ENCODE measurements at regions of chr10 and their contacts with region 1.

Region 1: DNA sequence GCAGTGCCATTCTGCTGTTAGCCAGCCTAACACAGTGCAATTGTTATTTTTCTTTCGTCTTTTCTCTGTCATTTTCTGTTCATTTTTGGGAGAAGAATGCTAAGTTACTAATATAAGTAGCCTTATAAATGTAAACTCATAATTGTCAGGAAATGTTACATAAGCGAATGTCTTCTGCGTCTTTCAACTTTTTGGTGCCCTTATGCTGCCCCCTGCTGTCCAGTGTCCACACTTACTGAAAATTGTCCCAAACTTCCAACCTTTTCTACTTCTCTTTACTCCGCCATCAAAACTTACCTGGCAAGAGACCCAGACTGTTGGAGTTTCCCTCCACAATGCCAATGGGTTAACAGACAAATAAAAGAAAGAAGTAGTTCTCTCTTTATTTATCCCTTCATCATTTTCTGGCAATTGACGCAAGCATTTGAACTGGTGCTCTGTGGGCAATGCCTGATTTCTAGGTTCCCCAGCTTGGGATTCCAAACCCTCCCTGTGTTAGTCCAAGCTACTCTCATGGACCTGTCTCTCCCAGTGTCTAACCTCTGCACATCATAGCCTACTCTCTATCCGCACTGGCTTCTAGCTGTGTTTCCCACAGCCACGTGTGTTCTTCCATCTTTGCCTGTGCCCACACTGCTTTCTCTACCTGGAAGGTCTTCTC is 21.0 kb upstream of the EPC1 start:
- DNase-seq: no peak
- H3K4me3 ChIP-seq: peak overlapping the region in 3 of 4 donors; percentile 10 to 14 (median 13)
- H3K27ac ChIP-seq: peak overlapping the region; percentile 42 to 66 (median 60)
- H3K4me1 ChIP-seq: peaks cover 48 to 87% (median 78%) of the 10 kb centered on the region in 4 donors
- H3K27me3 ChIP-seq: no peaks in the 10 kb centered on the region
- CTCF ChIP-seq: peak; percentile 78 to 82 (median 80)
- EP300 ChIP-seq: no peak
- POLR2A ChIP-seq: no peak

Region 2: DNA sequence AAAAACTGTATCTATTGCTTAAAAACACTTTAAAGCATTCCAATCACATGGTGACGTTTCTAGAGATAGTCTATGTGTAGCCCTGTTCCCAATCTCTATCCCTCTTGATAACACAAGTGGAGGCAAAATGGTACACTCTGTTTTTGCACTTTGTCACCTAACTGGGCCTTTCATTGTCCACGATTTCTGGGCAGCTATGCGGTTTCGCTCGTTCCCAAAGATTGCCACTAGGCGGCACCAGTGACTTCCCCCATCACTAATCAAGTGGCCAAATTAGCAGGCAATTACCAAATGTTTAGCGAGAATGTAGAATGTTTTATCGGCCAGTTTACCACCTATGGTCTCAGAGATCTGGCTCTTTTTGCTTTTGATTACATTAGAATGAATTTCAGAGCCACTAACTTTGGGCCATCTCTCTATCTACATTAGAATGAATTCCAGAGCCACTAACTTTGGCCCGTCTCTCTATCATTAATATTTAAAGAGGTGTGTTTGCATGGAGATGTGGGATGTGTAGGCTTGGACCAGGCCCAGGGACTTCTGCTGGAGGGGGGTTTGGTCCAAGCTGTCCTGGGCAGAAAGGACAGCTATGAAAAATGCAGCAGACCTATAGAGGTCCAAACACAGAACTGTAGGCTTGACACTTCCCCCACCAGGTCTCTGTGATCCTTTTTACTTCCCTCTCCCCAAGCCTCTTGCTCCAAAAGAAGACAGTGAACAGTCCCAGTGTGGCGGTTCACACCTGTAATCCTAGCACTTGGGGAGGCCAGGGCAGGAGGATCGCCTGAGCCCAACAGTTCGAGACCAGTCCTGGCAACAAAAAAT is 111.1 kb before region 1 on chr10:
- intact Hi-C with region 1: loop called (anchors 5 kb)
- DNase-seq: no peak
- H3K4me3 ChIP-seq: no peak overlapping the region
- H3K27ac ChIP-seq: no peak overlapping the region
- H3K4me1 ChIP-seq: peaks cover 0 to 9% (median 4%) of the 10 kb centered on the region in 4 donors
- H3K27me3 ChIP-seq: no peaks in the 10 kb centered on the region
- CTCF ChIP-seq: peak; percentile 87 to 93 (median 88)
- EP300 ChIP-seq: no peak
- POLR2A ChIP-seq: no peak

Region 3: DNA sequence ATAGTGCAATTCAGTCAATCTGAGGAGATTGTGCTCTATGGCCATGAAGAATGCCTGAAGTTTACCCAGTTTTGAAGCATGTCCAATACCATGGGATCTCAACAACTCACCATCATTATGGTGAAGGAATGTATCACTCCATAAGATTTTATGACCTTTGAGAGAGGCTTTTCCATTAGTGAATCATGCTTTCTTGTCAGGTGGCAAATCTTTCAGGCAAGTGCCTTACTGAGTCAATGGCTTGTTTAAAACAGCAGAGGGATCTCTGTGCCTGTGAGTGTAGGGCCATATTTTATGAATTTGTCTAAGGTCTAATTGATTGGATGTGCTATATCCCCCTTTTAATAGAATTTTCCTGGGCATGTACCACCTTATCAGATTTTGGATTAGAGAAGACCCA is 209.5 kb after region 1 on chr10:
- intact Hi-C with region 1: no loop called
- DNase-seq: no peak
- H3K4me3 ChIP-seq: no peak overlapping the region
- H3K27ac ChIP-seq: no peak overlapping the region
- H3K4me1 ChIP-seq: peaks cover 0 to 5% (median 0%) of the 10 kb centered on the region in 4 donors
- H3K27me3 ChIP-seq: no peaks in the 10 kb centered on the region
- CTCF ChIP-seq: no peak
- EP300 ChIP-seq: no peak
- POLR2A ChIP-seq: no peak

Measured in esophagus muscularis mucosa (tissue), 4 donors.